ENCODE measurements at regions of chr17 and their contacts with region 1.

Region 1: DNA sequence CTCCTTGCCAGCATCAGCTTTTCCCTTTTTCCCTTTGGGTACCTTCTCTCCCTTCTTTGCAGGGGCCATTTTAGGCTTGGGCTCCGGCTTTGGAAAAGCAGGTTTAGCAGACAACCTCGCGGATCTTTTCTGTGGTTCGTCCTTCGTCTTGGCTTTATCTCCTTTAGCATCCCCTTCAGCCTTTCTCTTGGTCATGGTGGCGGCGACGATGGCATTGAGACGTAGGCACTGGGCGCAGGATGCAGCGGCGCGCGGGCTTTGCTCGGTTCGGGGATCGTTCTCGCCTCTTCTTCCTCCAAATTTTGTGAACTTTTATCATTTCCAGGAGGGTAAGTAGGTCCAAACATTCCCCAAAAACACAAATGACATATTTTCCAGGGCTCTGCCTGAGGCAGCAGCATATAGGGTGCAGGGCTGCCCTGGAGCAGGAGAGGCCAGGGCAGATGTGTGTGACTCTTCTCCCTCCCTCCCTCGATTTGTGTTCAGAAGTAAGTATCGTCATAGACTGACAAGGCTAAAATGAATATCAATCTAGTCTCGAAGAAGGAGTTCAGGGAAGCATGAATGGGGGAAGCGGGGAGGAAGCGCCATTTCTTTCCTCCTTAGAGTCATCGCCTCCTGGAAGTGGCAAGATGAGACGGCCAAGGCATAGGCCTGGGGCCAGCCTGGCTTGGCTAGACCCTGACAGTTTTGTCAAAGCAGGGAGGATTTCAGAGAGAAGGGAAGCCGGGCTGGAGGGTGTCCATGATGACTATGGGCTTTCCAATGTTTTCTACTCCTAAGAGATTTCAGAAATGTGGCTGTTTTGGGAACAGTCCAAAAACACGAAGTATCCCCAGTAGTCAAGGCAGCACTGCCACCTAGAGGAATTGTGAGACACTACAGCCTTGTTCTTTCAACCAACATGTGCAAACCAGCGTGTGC is 13.2 kb downstream of the CHCT1 start:
- DNase-seq: peak; percentile 51 to 66 (median 63)
- H3K4me3 ChIP-seq: no peak overlapping the region
- H3K4me3 Mint-ChIP-seq: no peak overlapping the region
- H3K27ac ChIP-seq: no peak overlapping the region
- H3K27ac Mint-ChIP-seq: no peak overlapping the region
- H3K4me1 ChIP-seq: no peaks in the 10 kb centered on the region
- H3K4me1 Mint-ChIP-seq: peaks cover 0 to 3% (median 1%) of the 10 kb centered on the region in 4 donors
- H3K27me3 ChIP-seq: no peaks in the 10 kb centered on the region
- H3K27me3 Mint-ChIP-seq: peaks cover 6 to 7% of the 10 kb centered on the region in 2 donors

Region 2: GRCh38 chr17:60036796-60037612 is 398.5 kb before region 1 on chr17:
- CTCF ChIA-PET with region 1: no interaction called
- POLR2A ChIA-PET with region 1: no interaction called
- intact Hi-C with region 1: loop called (anchors 5 kb)
- DNase-seq: peak; percentile 63 to 69 (median 67)
- H3K4me3 ChIP-seq: no peak overlapping the region
- H3K4me3 Mint-ChIP-seq: no peak overlapping the region
- H3K27ac ChIP-seq: no peak overlapping the region
- H3K27ac Mint-ChIP-seq: peak overlapping the region in 2 of 7 donors; percentile 13 to 53
- H3K4me1 ChIP-seq: no peaks in the 10 kb centered on the region
- H3K4me1 Mint-ChIP-seq: peaks cover 5% of the 10 kb centered on the region in 4 donors
- H3K27me3 ChIP-seq: peaks cover 4% of the 10 kb centered on the region
- H3K27me3 Mint-ChIP-seq: peaks cover 10 to 12% of the 10 kb centered on the region in 2 donors

Region 3: GRCh38 chr17:60142872-60143499 is 292.5 kb before region 1 on chr17:
- CTCF ChIA-PET with region 1: interaction called, 5 read pairs
- POLR2A ChIA-PET with region 1: no interaction called
- intact Hi-C with region 1: loop called (anchors 1 kb)
- DNase-seq: peak; percentile 63 to 77 (median 66)
- H3K4me3 ChIP-seq: no peak overlapping the region
- H3K4me3 Mint-ChIP-seq: peak overlapping the region in 2 of 8 donors; percentile 1 to 17
- H3K27ac ChIP-seq: no peak overlapping the region
- H3K27ac Mint-ChIP-seq: peak overlapping the region in 1 of 7 donors; percentile 22
- H3K4me1 ChIP-seq: peaks cover 20% of the 10 kb centered on the region
- H3K4me1 Mint-ChIP-seq: peaks cover 12 to 33% (median 17%) of the 10 kb centered on the region in 4 donors
- H3K27me3 ChIP-seq: peaks cover 46% of the 10 kb centered on the region
- H3K27me3 Mint-ChIP-seq: peaks cover 60 to 65% of the 10 kb centered on the region in 2 donors

Region 4: DNA sequence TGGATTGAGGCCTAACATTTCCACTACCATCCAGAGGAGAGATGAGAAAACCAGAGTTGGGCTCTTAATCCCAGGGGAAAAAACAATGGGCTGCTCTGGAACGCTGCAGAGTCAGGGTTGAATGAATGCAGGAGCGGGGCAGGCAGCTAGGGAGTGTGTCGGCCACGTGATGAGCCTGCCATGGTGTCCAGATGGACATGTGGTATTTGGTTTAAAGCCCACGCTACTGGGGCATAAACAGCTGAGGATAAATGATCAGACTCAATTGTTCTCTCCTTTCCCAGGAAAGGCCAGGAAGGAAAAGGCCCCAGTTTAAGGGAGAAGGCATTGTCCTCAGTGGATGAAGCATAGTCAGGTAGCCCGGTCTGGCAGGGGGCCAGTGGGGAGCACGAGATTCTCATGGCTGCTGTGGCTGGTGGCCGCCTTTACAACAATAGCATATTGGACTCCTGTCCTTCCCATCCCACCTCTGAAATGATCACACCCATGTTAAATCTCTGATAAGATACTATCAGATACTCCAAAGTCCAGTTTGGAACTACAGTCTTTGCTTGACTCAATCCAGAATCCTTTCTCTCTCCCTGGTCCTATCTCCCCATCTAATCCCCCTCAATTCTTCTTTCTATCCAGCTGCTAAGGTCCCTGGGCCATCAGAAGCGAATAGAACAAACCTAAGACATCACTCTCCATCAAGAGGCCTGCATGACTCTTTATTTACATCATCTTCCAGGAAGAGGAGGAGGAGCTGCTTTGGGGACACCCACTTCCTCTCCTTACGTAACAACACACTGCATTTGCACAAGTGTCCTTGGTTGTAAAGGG is 265.4 kb before region 1 on chr17:
- CTCF ChIA-PET with region 1: no interaction called
- POLR2A ChIA-PET with region 1: no interaction called
- intact Hi-C with region 1: no loop called
- DNase-seq: peak in 3 of 5 donors; percentile 22 to 27 (median 26)
- H3K4me3 ChIP-seq: no peak overlapping the region
- H3K4me3 Mint-ChIP-seq: peak overlapping the region in 1 of 8 donors; percentile 19
- H3K27ac ChIP-seq: no peak overlapping the region
- H3K27ac Mint-ChIP-seq: peak overlapping the region in 6 of 7 donors; percentile 16 to 80 (median 66)
- H3K4me1 ChIP-seq: peaks cover 24% of the 10 kb centered on the region
- H3K4me1 Mint-ChIP-seq: peaks cover 15 to 33% (median 26%) of the 10 kb centered on the region in 4 donors
- H3K27me3 ChIP-seq: no peaks in the 10 kb centered on the region
- H3K27me3 Mint-ChIP-seq: no peaks in the 10 kb centered on the region

Region 5: DNA sequence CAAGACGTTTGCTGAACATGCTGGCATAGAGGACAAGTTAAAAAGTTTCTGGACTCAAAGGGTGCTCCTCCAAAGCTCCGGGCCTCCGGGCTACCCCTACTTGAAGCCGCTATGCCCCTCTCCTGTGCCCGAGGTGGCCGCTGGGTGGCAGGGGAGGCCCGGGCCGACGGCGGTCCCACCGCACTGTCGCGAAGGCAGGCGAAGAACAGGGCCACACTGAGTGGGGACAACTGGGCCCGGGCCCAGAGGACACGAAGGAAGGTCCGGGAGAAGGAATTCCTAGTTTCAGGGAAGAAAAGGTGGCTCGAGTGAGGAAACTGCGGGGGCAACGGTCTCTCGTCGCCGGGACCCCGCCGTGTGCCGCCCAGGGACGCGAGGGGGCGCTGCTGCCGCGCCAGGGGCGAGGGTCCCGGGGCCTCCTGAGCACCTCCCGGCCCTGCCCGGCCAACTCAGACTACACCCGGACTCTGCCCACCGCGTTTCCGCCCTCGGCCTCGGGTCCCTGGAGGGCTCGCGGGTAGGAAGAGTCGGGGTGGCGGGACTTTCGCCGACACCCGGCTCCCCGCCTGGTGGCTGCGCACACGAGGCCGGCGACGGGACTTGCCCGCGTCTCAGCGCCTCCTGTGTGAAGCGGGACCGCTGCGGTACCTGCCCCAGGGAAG is 14.1 kb before region 1 on chr17:
- CTCF ChIA-PET with region 1: interaction called, 6 read pairs
- POLR2A ChIA-PET with region 1: no interaction called
- intact Hi-C with region 1: loop called (anchors 1 kb)
- DNase-seq: peak; percentile 60 to 73 (median 70)
- H3K4me3 ChIP-seq: peak overlapping the region; percentile 52 to 66
- H3K4me3 Mint-ChIP-seq: peak overlapping the region; percentile 72 to 88 (median 80)
- H3K27ac ChIP-seq: peak overlapping the region; percentile 16
- H3K27ac Mint-ChIP-seq: peak overlapping the region in 6 of 7 donors; percentile 57 to 80 (median 68)
- H3K4me1 ChIP-seq: peaks cover 7% of the 10 kb centered on the region
- H3K4me1 Mint-ChIP-seq: peaks cover 5 to 10% (median 7%) of the 10 kb centered on the region in 4 donors
- H3K27me3 ChIP-seq: no peaks in the 10 kb centered on the region
- H3K27me3 Mint-ChIP-seq: no peaks in the 10 kb centered on the region

Region 6: GRCh38 chr17:60481604-60482003 is 46.1 kb after region 1 on chr17:
- CTCF ChIA-PET with region 1: no interaction called
- POLR2A ChIA-PET with region 1: no interaction called
- intact Hi-C with region 1: no loop called
- DNase-seq: no peak
- H3K4me3 ChIP-seq: no peak overlapping the region
- H3K4me3 Mint-ChIP-seq: no peak overlapping the region
- H3K27ac ChIP-seq: no peak overlapping the region
- H3K27ac Mint-ChIP-seq: no peak overlapping the region
- H3K4me1 ChIP-seq: no peaks in the 10 kb centered on the region
- H3K4me1 Mint-ChIP-seq: peaks cover 0 to 4% (median 2%) of the 10 kb centered on the region in 4 donors
- H3K27me3 ChIP-seq: no peaks in the 10 kb centered on the region
- H3K27me3 Mint-ChIP-seq: no peaks in the 10 kb centered on the region

Region 7: GRCh38 chr17:60586288-60586974 is 150.9 kb after region 1 on chr17:
- CTCF ChIA-PET with region 1: no interaction called
- POLR2A ChIA-PET with region 1: no interaction called
- intact Hi-C with region 1: no loop called
- DNase-seq: no peak
- H3K4me3 ChIP-seq: no peak overlapping the region
- H3K4me3 Mint-ChIP-seq: no peak overlapping the region
- H3K27ac ChIP-seq: no peak overlapping the region
- H3K27ac Mint-ChIP-seq: no peak overlapping the region
- H3K4me1 ChIP-seq: no peaks in the 10 kb centered on the region
- H3K4me1 Mint-ChIP-seq: no peaks in the 10 kb centered on the region
- H3K27me3 ChIP-seq: no peaks in the 10 kb centered on the region
- H3K27me3 Mint-ChIP-seq: peaks cover under 1 to 2% of the 10 kb centered on the region in 2 donors